WTC11 (cell line): ENCODE measurements at regions of chr12 and their contacts with region 1.

Region 1: GRCh38 chr12:54658306-54659264 is 10.4 kb upstream of the DCD start:
- DNase-seq: peak; percentile 87
- ATAC-seq: peak; percentile 94
- H3K4me3 Mint-ChIP-seq: peak overlapping the region; percentile 56
- H3K27ac Mint-ChIP-seq: peak overlapping the region; percentile 60; the same call in 1 of the 2 replicates
- H3K4me1 Mint-ChIP-seq: peaks cover 16% of the 10 kb centered on the region
- H3K27me3 Mint-ChIP-seq: peaks cover 15% of the 10 kb centered on the region
- CTCF ChIP-seq: peak; percentile 71

Region 2: GRCh38 chr12:54579696-54580333 is 78.8 kb before region 1 on chr12:
- CTCF ChIA-PET with region 1: interaction called, 24 read pairs
- POLR2A ChIA-PET with region 1: no interaction called
- DNase-seq: peak; percentile 96
- ATAC-seq: peak; percentile 96
- H3K4me3 Mint-ChIP-seq: no peak overlapping the region
- H3K27ac Mint-ChIP-seq: no peak overlapping the region
- H3K4me1 Mint-ChIP-seq: peaks cover 34% of the 10 kb centered on the region
- H3K27me3 Mint-ChIP-seq: peaks cover 39% of the 10 kb centered on the region
- CTCF ChIP-seq: peak; percentile 100

Region 3: DNA sequence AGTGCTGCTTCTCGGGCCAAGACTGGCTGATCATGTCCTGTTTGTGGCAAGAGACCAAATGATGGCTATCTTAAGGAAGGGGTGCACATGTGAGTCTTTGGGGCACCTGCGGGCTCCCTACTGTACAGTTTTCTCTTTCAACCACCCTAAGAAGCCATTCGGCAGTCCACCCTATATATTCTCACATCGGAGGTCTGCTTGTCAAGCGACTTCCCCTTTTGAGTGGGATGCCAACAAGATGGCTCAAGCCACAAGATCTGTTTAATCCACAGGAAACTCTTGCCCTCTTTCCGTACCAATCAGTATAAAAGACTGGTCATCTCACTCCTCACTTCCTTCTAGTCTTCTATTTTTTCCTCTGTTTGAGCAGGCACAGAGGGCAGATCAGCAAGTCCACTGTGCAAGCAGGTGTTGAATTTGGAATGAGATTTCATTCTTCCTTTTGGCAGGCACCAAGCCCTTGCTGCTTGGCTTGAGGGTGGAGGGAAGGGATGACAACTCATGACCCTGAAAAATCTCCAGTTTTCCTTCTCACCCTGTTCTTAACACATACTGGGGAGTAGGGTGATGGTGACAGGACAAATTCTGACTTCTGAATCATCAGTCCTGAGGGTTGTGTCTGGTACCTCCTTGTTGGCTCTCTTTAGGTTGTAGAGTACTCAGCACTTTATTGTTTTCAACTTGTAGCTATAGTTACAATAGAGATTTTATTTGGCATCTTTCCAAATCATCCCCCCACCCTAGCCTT is 41.5 kb before region 1 on chr12:
- CTCF ChIA-PET with region 1: interaction called, 10 read pairs
- POLR2A ChIA-PET with region 1: no interaction called
- DNase-seq: no peak
- ATAC-seq: no peak
- H3K4me3 Mint-ChIP-seq: no peak overlapping the region
- H3K27ac Mint-ChIP-seq: no peak overlapping the region
- H3K4me1 Mint-ChIP-seq: no peaks in the 10 kb centered on the region
- H3K27me3 Mint-ChIP-seq: peaks cover 85% of the 10 kb centered on the region
- CTCF ChIP-seq: no peak

Region 4: GRCh38 chr12:54689984-54690383 is 31.4 kb after region 1 on chr12:
- CTCF ChIA-PET with region 1: interaction called, 75 read pairs
- POLR2A ChIA-PET with region 1: no interaction called
- DNase-seq: peak; percentile 40
- ATAC-seq: peak; percentile 99
- H3K4me3 Mint-ChIP-seq: no peak overlapping the region
- H3K27ac Mint-ChIP-seq: no peak overlapping the region
- H3K4me1 Mint-ChIP-seq: peaks cover 20% of the 10 kb centered on the region
- H3K27me3 Mint-ChIP-seq: peaks cover 24% of the 10 kb centered on the region
- CTCF ChIP-seq: no peak

Region 5: GRCh38 chr12:54749191-54749818 is 90.7 kb after region 1 on chr12:
- CTCF ChIA-PET with region 1: interaction called, 10 read pairs
- POLR2A ChIA-PET with region 1: no interaction called
- DNase-seq: no peak
- ATAC-seq: peak; percentile 53; the same call in 1 of the 2 replicates
- H3K4me3 Mint-ChIP-seq: no peak overlapping the region
- H3K27ac Mint-ChIP-seq: no peak overlapping the region
- H3K4me1 Mint-ChIP-seq: no peaks in the 10 kb centered on the region
- H3K27me3 Mint-ChIP-seq: no peaks in the 10 kb centered on the region
- CTCF ChIP-seq: peak; percentile 56